ENCODE measurements at regions of chr3 and their contacts with region 1.

Region 1: DNA sequence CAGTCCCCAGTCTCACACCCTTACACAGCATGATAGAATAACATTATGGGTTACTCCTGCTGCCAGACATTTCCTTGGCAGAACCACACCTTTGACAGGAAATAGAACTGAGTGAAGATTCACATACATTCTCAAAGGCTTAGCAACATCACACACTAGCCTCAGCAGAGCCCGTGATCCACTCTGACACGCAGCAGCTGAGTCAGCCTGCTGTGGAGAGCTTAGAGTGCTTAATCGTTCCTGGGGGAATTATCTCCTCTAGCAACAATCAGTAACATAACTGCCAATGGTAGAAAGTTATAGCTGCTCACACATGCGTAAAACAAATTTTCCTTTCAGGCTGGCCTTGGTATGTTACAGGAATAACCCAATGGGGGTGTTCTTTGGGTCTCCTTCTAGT is 382.1 kb downstream of the GAP43 start:
- DNase-seq: peak; percentile 76
- ATAC-seq: peak; percentile 95
- H3K4me3 ChIP-seq: no peak overlapping the region
- H3K27ac ChIP-seq: peak overlapping the region; percentile 71
- H3K4me1 ChIP-seq: peaks cover 27% of the 10 kb centered on the region
- H3K27me3 ChIP-seq: no peaks in the 10 kb centered on the region
- CTCF ChIP-seq: no peak

Region 2: DNA sequence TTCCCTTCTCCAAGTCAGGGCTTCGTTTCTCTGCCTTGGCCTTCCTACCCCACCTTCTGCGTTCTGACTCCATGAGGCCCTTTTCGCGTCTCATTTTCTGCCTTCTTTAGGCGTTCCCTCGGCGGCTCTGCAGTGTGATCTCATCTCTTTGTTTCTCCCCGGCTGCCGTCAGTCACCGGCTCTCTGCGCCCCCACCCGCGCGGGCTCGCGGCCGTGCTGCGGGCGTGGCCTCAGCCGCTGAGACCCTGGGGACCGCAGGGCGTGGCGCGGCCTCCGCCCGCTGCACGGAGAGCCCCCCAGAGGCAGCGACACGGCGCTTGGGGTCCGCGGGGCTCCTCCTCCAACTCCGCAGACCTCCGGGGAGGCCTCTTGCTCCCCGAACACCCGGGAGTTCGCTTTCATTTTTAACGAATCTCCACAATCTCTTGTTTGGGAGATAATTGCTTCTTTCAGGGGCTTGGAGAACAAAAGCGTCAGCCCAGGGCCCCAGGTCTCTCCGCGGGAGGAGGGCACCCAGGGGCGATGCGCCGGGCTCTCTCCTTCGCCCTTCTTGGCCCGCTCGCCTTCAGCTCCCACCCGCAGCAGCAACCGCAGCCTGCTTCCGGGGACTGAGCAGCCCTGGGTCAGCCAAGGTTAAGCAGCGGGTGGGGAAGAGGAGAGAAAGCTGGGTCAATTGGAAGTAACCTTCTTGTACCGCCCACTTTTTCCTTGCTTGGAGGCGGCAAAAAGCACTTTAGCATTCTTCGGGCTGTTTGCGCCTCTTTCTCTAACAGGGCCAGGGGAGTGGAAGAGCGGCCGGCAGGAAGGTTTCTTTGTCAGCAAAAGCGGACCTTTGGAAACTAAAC is 346.8 kb before region 1 on chr3:
- CTCF ChIA-PET with region 1: no interaction called
- POLR2A ChIA-PET with region 1: no interaction called
- intact Hi-C with region 1: no loop called
- DNase-seq: peak; percentile 66
- ATAC-seq: peak; percentile 90
- H3K4me3 ChIP-seq: peak overlapping the region; percentile 80
- H3K27ac ChIP-seq: no peak overlapping the region
- H3K4me1 ChIP-seq: peaks cover 5% of the 10 kb centered on the region
- H3K27me3 ChIP-seq: peaks cover 37% of the 10 kb centered on the region
- CTCF ChIP-seq: no peak

Region 3: DNA sequence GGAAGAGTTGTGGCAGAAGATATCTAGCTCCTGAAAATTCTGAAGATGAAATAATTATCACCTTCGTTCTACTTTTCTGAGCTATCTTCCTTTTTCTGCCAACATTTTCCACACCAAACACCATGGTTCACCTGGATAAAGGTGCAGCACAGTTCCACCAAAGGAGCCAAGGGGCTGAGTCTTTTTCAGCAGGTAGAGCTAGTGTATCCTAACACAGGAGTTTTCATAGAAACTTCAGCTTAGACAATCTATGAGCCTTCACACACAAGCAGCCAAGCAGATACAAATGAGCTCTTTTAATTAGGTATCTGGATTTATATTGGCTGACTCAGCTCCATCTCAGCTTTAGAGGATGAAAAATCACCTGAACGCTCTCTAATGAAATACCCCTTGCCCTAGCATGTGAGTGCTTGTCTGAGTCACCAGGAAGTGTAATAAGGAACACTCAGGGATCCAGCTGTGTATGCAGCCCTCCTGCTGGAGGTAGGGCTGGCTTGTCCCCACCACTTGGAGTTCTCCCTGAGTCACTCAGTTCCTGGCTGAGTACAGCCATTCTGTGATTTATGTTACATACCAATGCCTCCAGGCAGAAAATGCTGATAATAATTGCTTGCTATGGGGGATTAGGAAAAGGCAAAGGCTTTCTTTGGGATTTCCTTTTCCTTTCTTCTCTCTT is 54.2 kb after region 1 on chr3:
- CTCF ChIA-PET with region 1: no interaction called
- POLR2A ChIA-PET with region 1: no interaction called
- intact Hi-C with region 1: loop called (anchors 5 kb)
- DNase-seq: peak; percentile 88
- ATAC-seq: peak; percentile 100
- H3K4me3 ChIP-seq: no peak overlapping the region
- H3K27ac ChIP-seq: peak overlapping the region; percentile 61
- H3K4me1 ChIP-seq: peaks cover 11% of the 10 kb centered on the region; the same call in 1 of the 2 replicates
- H3K27me3 ChIP-seq: no peaks in the 10 kb centered on the region
- CTCF ChIP-seq: no peak

Measured in PC-3 (cell line).